GM18951 (cell line): ENCODE measurements at regions of chr9 and their contacts with region 1.

Region 1: GRCh38 chr9:100028201-100028784 is 70.5 kb downstream of the ERP44 start:
- POLR2A ChIP-seq: no peak

Region 2: GRCh38 chr9:100222674-100223073 is 194.4 kb after region 1 on chr9:
- in situ Hi-C with region 1: loop called (anchors 10 kb)
- POLR2A ChIP-seq: no peak

Region 3: GRCh38 chr9:100322954-100323536 is 294.8 kb after region 1 on chr9:
- in situ Hi-C with region 1: loop called (anchors 25 kb)
- POLR2A ChIP-seq: no peak